ENCODE measurements at regions of chr7 and their contacts with region 1.

Region 1: GRCh38 chr7:90455163-90456030 is 14.0 kb upstream of the PTTG1IP2 start:
- DNase-seq: no peak
- ATAC-seq: peak; percentile 86
- H3K4me3 ChIP-seq: peak overlapping the region in 1 of 2 experiments; percentile 7; a peak in 1 of 4 replicates
- H3K27ac ChIP-seq: no peak overlapping the region
- H3K4me1 ChIP-seq: 0 out of 2 replicates have a peak, but pooled peaks cover 4% of the 10 kb centered on the region
- H3K27me3 ChIP-seq: peaks cover 2% of the 10 kb centered on the region; the same call in 1 of the 2 replicates
- CTCF ChIP-seq: peak; percentile 72

Region 2: DNA sequence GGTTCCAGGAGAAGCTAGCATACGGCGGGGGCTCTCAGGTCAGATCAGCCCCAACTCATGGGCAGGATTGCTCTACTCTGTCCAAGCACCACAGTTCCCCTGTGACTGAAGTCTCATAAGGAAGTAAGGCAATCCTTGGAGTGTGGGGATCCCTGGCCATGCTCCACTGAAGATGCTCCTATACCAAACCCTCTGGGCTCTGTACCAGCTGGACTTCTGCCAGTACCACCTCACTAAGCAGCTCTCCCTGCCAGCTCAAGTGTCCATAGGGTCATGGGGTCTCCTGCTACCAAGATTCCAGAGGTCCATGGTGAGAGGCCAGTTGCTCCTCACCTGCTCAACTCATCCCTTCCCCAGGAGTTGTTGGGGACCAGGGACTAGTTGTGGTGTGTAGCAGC is 656.8 kb before region 1 on chr7:
- CTCF ChIA-PET with region 1: no interaction called
- POLR2A ChIA-PET with region 1: no interaction called
- in situ Hi-C with region 1: no loop called
- intact Hi-C with region 1: no loop called
- DNase-seq: no peak
- ATAC-seq: no peak
- H3K4me3 ChIP-seq: no peak overlapping the region
- H3K27ac ChIP-seq: no peak overlapping the region
- H3K4me1 ChIP-seq: no peaks in the 10 kb centered on the region
- H3K27me3 ChIP-seq: no peaks in the 10 kb centered on the region
- CTCF ChIP-seq: no peak

Region 3: GRCh38 chr7:90290244-90291113 is 164.9 kb before region 1 on chr7:
- CTCF ChIA-PET with region 1: no interaction called
- POLR2A ChIA-PET with region 1: no interaction called
- in situ Hi-C with region 1: no loop called
- intact Hi-C with region 1: no loop called
- DNase-seq: no peak
- ATAC-seq: no peak
- H3K4me3 ChIP-seq: no peak overlapping the region
- H3K27ac ChIP-seq: no peak overlapping the region
- H3K4me1 ChIP-seq: no peaks in the 10 kb centered on the region
- H3K27me3 ChIP-seq: no peaks in the 10 kb centered on the region
- CTCF ChIP-seq: no peak

Region 4: DNA sequence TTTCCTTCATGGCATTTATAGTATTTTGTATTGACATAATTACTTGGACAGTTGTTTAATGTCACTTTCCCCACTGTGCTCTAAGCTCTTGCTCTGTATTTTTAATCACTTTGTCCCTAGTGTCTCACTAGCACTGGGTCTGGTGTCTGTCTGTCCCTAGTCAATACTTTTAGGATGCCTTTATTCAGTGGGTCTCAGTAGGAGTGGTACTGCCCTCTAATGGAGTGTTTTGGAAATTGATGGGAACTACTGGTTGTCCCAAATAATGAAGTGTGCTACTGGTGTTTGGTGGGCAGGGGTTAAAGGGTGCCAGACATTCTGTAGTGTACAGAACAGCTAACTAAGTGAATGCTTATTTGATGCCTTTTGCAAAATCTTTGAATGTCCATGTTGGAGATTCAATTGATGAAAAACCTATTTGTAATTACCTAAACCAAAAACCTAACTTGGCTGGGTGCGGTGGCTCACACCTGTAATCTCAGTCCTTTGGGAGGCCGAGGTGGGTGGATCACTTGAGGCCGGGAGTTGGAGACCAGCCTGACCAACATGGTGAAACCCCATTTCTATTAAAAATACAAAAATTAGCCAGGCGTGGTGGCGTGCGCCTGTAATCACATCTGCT is 174.0 kb after region 1 on chr7:
- CTCF ChIA-PET with region 1: interaction called, 3 read pairs
- POLR2A ChIA-PET with region 1: no interaction called
- in situ Hi-C with region 1: no loop called
- intact Hi-C with region 1: loop called (anchors 2 kb)
- DNase-seq: peak; percentile 36
- ATAC-seq: peak; percentile 79; the same call in 1 of the 2 replicates
- H3K4me3 ChIP-seq: no peak overlapping the region
- H3K27ac ChIP-seq: no peak overlapping the region
- H3K4me1 ChIP-seq: no peaks in the 10 kb centered on the region
- H3K27me3 ChIP-seq: no peaks in the 10 kb centered on the region
- CTCF ChIP-seq: peak; percentile 74